HEK293 (cell line): ENCODE measurements at regions of chr7 and their contacts with region 1.

Region 1: GRCh38 chr7:151038951-151039849 is 9.1 kb upstream of the ASIC3 start:
- H3K4me3 ChIP-seq: no peak overlapping the region
- H3K27ac ChIP-seq: peak overlapping the region; percentile 13
- H3K4me1 ChIP-seq: peaks cover 6% of the 10 kb centered on the region
- CTCF ChIP-seq: no peak

Region 2: GRCh38 chr7:151017953-151018420 is 21.2 kb before region 1 on chr7:
- CTCF ChIA-PET with region 1: interaction called, 15 read pairs
- POLR2A ChIA-PET with region 1: no interaction called
- H3K4me3 ChIP-seq: no peak overlapping the region
- H3K27ac ChIP-seq: no peak overlapping the region; the same call in 1 of the 2 replicates
- H3K4me1 ChIP-seq: no peaks in the 10 kb centered on the region
- CTCF ChIP-seq: peak; percentile 97

Region 3: DNA sequence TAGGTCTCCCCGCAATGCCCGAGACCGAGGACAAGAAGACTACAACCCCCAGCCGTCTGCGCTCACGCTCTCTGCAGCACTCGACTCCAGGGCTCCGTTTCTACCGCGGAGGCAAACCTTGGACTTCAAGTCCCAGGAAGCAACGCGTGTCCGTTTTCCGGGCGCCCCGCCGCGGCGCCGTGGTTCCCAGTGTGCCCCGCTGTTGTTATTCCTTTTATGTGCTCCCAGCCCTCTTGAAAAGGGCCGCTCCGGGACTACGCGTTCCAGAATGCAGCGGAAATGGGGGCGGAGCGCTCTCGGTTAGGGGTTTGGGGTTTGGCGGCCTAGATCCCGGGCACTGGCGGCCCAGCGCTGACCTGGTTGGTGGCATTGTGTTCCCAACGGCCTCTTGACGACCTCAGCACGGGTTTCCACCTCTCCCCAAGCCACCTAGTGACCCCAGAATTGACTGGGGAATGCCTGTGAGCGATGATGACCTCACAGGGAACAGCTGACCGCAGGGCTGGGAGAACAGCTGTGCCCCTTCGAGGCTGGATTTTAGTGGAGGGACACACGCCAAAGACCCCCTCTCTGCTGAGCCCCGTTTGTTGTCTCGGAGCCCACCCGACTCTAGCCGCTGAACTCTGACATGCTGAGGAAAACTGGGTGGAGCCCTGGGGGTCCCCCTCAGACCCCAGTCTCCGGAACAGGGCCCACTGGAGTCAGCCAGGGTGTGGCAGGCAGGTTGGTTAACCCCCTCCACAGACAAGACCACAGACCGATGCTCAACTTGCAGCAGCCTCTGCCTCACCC is 19.0 kb after region 1 on chr7:
- CTCF ChIA-PET with region 1: interaction called, 4 read pairs
- POLR2A ChIA-PET with region 1: interaction called, 13 read pairs
- H3K4me3 ChIP-seq: peak overlapping the region; percentile 49
- H3K27ac ChIP-seq: peak overlapping the region; percentile 48
- H3K4me1 ChIP-seq: no peaks in the 10 kb centered on the region; the same call in 1 of the 2 replicates
- CTCF ChIP-seq: no peak